CD4-positive, alpha-beta memory T cell (primary cell): ENCODE measurements at regions of chr6 and their contacts with region 1.

Region 1: DNA sequence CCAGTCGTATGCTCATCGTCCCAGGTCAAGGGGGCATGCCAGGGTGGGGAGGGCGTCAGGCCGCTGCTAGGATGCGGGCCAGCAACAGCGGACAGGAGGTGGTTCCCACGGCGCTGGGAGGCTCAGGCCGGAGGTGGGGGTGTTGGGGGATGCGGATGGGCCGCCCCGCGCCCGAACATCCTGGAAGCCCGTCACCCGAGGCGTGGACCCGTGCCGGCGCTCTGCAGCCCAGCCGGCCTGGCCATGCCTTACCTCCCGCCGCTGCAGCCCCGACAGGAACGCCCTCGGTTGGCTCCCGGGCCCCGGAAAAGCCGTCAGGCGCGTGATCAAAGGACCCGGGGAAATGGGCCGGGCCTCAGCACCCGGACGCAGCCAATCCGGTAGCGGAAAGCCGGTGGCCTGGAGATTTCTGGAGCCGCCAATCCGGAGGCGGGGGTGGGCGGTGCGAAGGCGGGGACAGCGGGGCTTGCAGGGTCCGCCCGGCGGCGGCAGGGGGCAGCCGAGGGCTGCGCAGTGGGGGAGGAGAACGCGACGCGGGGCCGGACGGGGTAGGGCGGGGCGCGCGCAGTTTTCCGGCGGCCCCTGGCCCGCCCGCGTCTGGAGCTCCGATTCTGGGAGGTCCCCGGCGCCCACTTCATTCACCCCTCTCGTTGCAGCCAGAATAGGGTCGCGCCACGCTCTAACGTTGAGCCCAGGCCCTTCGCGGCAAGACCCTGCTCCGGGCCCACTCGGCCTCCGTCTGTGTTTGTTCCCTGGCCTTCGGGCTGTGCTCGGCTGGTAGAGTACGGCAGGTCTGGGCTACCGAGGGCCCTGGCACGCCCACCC is at the start of gene SMIM29:
- DNase-seq: peak; percentile 96 to 98 (median 97)
- H3K4me3 ChIP-seq: peak within 1 kb of the TSS; percentile 82 to 86
- H3K4me3 Mint-ChIP-seq: peak within 1 kb of the TSS; percentile 91 to 97 (median 96)
- H3K27ac ChIP-seq: peak within 1 kb of the TSS; percentile 90
- H3K27ac Mint-ChIP-seq: peak within 1 kb of the TSS; percentile 91 to 99 (median 98)
- H3K4me1 ChIP-seq: peaks cover 35% of the 10 kb centered on the region
- H3K4me1 Mint-ChIP-seq: peaks cover 16 to 36% (median 25%) of the 10 kb centered on the region in 4 donors
- H3K27me3 ChIP-seq: no peaks in the 10 kb centered on the region
- H3K27me3 Mint-ChIP-seq: no peaks in the 10 kb centered on the region
- total RNA-seq, gene SMIM29: 29.7 to 30.1 TPM

Region 2: GRCh38 chr6:33508935-33509926 is 739.7 kb before region 1 on chr6:
- CTCF ChIA-PET with region 1: no interaction called
- POLR2A ChIA-PET with region 1: no interaction called
- intact Hi-C with region 1: no loop called
- DNase-seq: no peak
- H3K4me3 ChIP-seq: no peak overlapping the region
- H3K4me3 Mint-ChIP-seq: no peak overlapping the region
- H3K27ac ChIP-seq: no peak overlapping the region
- H3K27ac Mint-ChIP-seq: peak overlapping the region in 1 of 7 donors; percentile 4
- H3K4me1 ChIP-seq: peaks cover 8% of the 10 kb centered on the region
- H3K4me1 Mint-ChIP-seq: peaks cover 2 to 21% (median 8%) of the 10 kb centered on the region in 4 donors
- H3K27me3 ChIP-seq: no peaks in the 10 kb centered on the region
- H3K27me3 Mint-ChIP-seq: peaks cover 0 to 6% of the 10 kb centered on the region in 2 donors

Region 3: DNA sequence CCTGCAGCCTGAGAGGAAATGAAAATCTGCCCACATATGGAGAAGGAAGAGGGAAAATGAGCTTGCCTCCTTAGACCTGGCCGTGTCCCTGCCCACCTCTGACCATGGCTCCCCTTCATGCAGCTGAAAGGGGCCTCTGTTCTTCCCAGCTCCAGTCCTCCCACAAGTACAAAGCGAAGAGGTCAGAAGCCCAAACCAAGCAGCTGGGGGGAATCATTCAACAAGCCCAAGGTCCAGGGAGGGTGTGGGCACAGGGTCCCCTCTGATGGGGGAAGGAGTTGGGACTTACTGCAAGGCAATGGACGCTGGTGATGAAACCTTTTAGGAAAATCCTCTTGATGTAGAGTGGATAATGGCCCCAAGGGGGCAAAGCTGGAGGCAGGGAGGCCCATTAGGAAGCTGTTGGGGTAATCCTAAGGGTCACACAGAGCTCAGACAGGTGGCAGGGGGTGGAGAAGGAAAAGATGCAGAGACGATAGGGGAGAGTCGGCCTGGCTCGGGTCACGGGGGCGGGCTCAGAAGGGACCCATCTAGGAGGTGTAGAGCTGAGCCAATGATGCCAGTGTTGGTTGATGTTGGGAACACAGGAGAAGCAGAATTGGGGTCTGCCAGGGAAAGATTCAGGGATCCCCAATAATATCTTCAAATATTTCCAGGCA is 87.0 kb before region 1 on chr6:
- CTCF ChIA-PET with region 1: interaction called, 27 read pairs
- POLR2A ChIA-PET with region 1: interaction called, 4 read pairs
- intact Hi-C with region 1: loop called (anchors 5 kb)
- DNase-seq: no peak
- H3K4me3 ChIP-seq: no peak overlapping the region
- H3K4me3 Mint-ChIP-seq: peak overlapping the region in 1 of 8 donors; percentile 7
- H3K27ac ChIP-seq: no peak overlapping the region
- H3K27ac Mint-ChIP-seq: peak overlapping the region in 1 of 7 donors; percentile 66
- H3K4me1 ChIP-seq: peaks cover 4% of the 10 kb centered on the region
- H3K4me1 Mint-ChIP-seq: peaks cover 0 to 8% (median 4%) of the 10 kb centered on the region in 4 donors
- H3K27me3 ChIP-seq: no peaks in the 10 kb centered on the region
- H3K27me3 Mint-ChIP-seq: no peaks in the 10 kb centered on the region

Region 4: GRCh38 chr6:34202329-34203201 is 46.4 kb before region 1 on chr6:
- CTCF ChIA-PET with region 1: interaction called, 39 read pairs
- POLR2A ChIA-PET with region 1: interaction called, 24 read pairs
- intact Hi-C with region 1: no loop called
- DNase-seq: no peak
- H3K4me3 ChIP-seq: no peak overlapping the region
- H3K4me3 Mint-ChIP-seq: no peak overlapping the region
- H3K27ac ChIP-seq: no peak overlapping the region
- H3K27ac Mint-ChIP-seq: no peak overlapping the region
- H3K4me1 ChIP-seq: peaks cover 5% of the 10 kb centered on the region
- H3K4me1 Mint-ChIP-seq: peaks cover under 1 to 7% (median 1%) of the 10 kb centered on the region in 4 donors
- H3K27me3 ChIP-seq: no peaks in the 10 kb centered on the region
- H3K27me3 Mint-ChIP-seq: no peaks in the 10 kb centered on the region

Region 5: DNA sequence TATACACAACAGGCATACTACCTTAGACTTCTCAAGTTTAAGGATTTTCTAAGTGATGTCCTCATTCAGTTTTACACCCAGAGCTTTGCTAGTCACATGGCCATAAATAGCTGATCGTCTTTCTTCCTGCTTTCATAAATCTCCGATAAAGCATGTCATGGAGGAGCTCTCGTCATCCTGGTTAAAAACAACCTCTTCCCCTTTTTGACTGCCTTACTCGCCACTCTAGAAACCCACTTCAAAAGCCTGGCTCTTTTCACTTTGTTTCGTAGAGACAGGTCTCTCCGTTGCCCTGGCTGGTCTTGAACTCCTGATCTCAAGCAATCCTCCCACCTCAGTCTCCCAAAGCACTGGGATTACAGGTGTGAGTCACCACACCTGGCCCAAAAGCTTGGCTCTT is 66.8 kb after region 1 on chr6:
- CTCF ChIA-PET with region 1: no interaction called
- POLR2A ChIA-PET with region 1: no interaction called
- intact Hi-C with region 1: loop called (anchors 5 kb)
- DNase-seq: peak in 2 of 5 donors; percentile 6 to 10
- H3K4me3 ChIP-seq: no peak overlapping the region
- H3K4me3 Mint-ChIP-seq: peak overlapping the region in 6 of 8 donors; percentile 38 to 81 (median 64)
- H3K27ac ChIP-seq: no peak overlapping the region
- H3K27ac Mint-ChIP-seq: peak overlapping the region; percentile 30 to 96 (median 82)
- H3K4me1 ChIP-seq: peaks cover 35% of the 10 kb centered on the region
- H3K4me1 Mint-ChIP-seq: peaks cover 28 to 52% (median 44%) of the 10 kb centered on the region in 4 donors
- H3K27me3 ChIP-seq: no peaks in the 10 kb centered on the region
- H3K27me3 Mint-ChIP-seq: no peaks in the 10 kb centered on the region

Region 6: GRCh38 chr6:34425498-34426410 is 176.8 kb after region 1 on chr6 and contains the start of gene RPS10:
- CTCF ChIA-PET with region 1: interaction called, 11 read pairs
- POLR2A ChIA-PET with region 1: interaction called, 13 read pairs
- intact Hi-C with region 1: loop called (anchors 1 kb)
- DNase-seq: peak; percentile 85 to 90 (median 87)
- H3K4me3 ChIP-seq: peak within 1 kb of the TSS; percentile 80 to 95
- H3K4me3 Mint-ChIP-seq: peak within 1 kb of the TSS; percentile 97 to 99 (median 98)
- H3K27ac ChIP-seq: peak within 1 kb of the TSS; percentile 94
- H3K27ac Mint-ChIP-seq: peak within 1 kb of the TSS; percentile 96 to 99 (median 97)
- H3K4me1 ChIP-seq: peaks cover 30% of the 10 kb centered on the region
- H3K4me1 Mint-ChIP-seq: peaks cover 16 to 42% (median 32%) of the 10 kb centered on the region in 4 donors
- H3K27me3 ChIP-seq: no peaks in the 10 kb centered on the region
- H3K27me3 Mint-ChIP-seq: no peaks in the 10 kb centered on the region
- total RNA-seq, gene RPS10: 2,689 to 2,757 TPM

Region 7: GRCh38 chr6:34476447-34476846 is 227.5 kb after region 1 on chr6:
- CTCF ChIA-PET with region 1: no interaction called
- POLR2A ChIA-PET with region 1: no interaction called
- intact Hi-C with region 1: no loop called
- DNase-seq: no peak
- H3K4me3 ChIP-seq: no peak overlapping the region
- H3K4me3 Mint-ChIP-seq: no peak overlapping the region
- H3K27ac ChIP-seq: no peak overlapping the region
- H3K27ac Mint-ChIP-seq: no peak overlapping the region
- H3K4me1 ChIP-seq: no peaks in the 10 kb centered on the region
- H3K4me1 Mint-ChIP-seq: no peaks in the 10 kb centered on the region
- H3K27me3 ChIP-seq: no peaks in the 10 kb centered on the region
- H3K27me3 Mint-ChIP-seq: no peaks in the 10 kb centered on the region

Region 8: GRCh38 chr6:34546551-34547321 is 297.8 kb after region 1 on chr6:
- CTCF ChIA-PET with region 1: no interaction called
- POLR2A ChIA-PET with region 1: no interaction called
- intact Hi-C with region 1: no loop called
- DNase-seq: no peak
- H3K4me3 ChIP-seq: no peak overlapping the region
- H3K4me3 Mint-ChIP-seq: no peak overlapping the region
- H3K27ac ChIP-seq: no peak overlapping the region
- H3K27ac Mint-ChIP-seq: no peak overlapping the region
- H3K4me1 ChIP-seq: no peaks in the 10 kb centered on the region
- H3K4me1 Mint-ChIP-seq: peaks cover 0 to 1% (median 0%) of the 10 kb centered on the region in 4 donors
- H3K27me3 ChIP-seq: no peaks in the 10 kb centered on the region
- H3K27me3 Mint-ChIP-seq: no peaks in the 10 kb centered on the region

Region 9: GRCh38 chr6:34757687-34758274 is 508.8 kb after region 1 on chr6:
- CTCF ChIA-PET with region 1: no interaction called
- POLR2A ChIA-PET with region 1: interaction called, 3 read pairs
- intact Hi-C with region 1: loop called (anchors 5 kb)
- DNase-seq: no peak
- H3K4me3 ChIP-seq: peak overlapping the region; percentile 86 to 96
- H3K4me3 Mint-ChIP-seq: no peak overlapping the region
- H3K27ac ChIP-seq: peak overlapping the region; percentile 74
- H3K27ac Mint-ChIP-seq: no peak overlapping the region
- H3K4me1 ChIP-seq: peaks cover 25% of the 10 kb centered on the region
- H3K4me1 Mint-ChIP-seq: peaks cover 6 to 8% (median 6%) of the 10 kb centered on the region in 4 donors
- H3K27me3 ChIP-seq: no peaks in the 10 kb centered on the region
- H3K27me3 Mint-ChIP-seq: no peaks in the 10 kb centered on the region